ENCODE measurements at regions of chr3 and their contacts with region 1.

Region 1: GRCh38 chr3:187025656-187026316 is 95.5 kb downstream of the ST6GAL1 start:
- DNase-seq: peak; percentile 68
- ATAC-seq: peak; percentile 38
- H3K4me3 Mint-ChIP-seq: peak overlapping the region; percentile 84
- H3K27ac Mint-ChIP-seq: peak overlapping the region; percentile 98
- H3K4me1 Mint-ChIP-seq: peaks cover 46% of the 10 kb centered on the region
- H3K27me3 Mint-ChIP-seq: no peaks in the 10 kb centered on the region
- CTCF ChIP-seq: no peak

Region 2: GRCh38 chr3:185724761-185725160 is 1301.0 kb before region 1 on chr3:
- CTCF ChIA-PET with region 1: no interaction called
- POLR2A ChIA-PET with region 1: no interaction called
- intact Hi-C with region 1: no loop called
- DNase-seq: no peak
- ATAC-seq: no peak
- H3K4me3 Mint-ChIP-seq: no peak overlapping the region
- H3K27ac Mint-ChIP-seq: no peak overlapping the region
- H3K4me1 Mint-ChIP-seq: no peaks in the 10 kb centered on the region
- H3K27me3 Mint-ChIP-seq: peaks cover 2% of the 10 kb centered on the region
- CTCF ChIP-seq: no peak

Region 3: DNA sequence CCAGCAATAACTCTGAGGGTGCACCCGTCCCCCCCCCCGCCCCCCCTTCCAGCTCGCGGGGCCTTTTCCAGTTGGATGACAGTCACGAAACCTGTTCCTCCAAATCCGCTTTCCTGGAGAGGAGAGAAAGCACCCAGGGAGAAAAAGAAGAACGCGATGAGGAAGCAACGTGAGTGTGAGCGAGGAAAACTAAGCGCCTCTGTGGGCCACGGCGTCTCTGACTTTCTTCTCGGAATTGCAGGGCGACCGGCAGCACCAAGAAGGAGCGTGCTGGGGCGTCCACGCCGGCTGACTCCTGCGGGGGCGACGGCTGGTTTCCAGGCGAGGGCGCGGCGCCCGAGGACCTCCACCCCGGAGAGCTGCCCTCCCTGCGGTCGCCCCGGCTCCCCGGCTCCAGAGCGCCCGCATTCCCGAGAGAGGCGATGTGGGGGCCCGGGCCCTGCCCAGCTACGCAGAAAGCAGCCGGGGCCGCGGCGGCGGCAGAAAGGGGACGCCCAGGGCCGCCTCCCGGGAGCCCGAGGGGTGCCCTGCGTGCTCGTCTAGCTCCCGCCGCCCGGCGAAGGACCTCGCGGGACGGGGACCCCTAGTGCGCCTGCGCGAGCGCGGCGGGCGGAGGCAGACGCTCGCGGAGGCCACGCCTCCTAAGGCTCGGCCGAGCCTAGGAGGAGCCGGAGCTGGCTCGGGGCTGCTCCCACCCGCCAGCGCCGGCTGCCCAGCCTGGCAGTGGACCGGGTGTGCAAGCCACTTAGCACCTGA is 198.6 kb before region 1 on chr3:
- CTCF ChIA-PET with region 1: interaction called, 3 read pairs
- POLR2A ChIA-PET with region 1: interaction called, 11 read pairs
- intact Hi-C with region 1: no loop called
- DNase-seq: peak; percentile 83
- ATAC-seq: peak; percentile 86
- H3K4me3 Mint-ChIP-seq: peak overlapping the region; percentile 81
- H3K27ac Mint-ChIP-seq: peak overlapping the region; percentile 71
- H3K4me1 Mint-ChIP-seq: peaks cover 28% of the 10 kb centered on the region
- H3K27me3 Mint-ChIP-seq: peaks cover 36% of the 10 kb centered on the region
- CTCF ChIP-seq: no peak

Region 4: DNA sequence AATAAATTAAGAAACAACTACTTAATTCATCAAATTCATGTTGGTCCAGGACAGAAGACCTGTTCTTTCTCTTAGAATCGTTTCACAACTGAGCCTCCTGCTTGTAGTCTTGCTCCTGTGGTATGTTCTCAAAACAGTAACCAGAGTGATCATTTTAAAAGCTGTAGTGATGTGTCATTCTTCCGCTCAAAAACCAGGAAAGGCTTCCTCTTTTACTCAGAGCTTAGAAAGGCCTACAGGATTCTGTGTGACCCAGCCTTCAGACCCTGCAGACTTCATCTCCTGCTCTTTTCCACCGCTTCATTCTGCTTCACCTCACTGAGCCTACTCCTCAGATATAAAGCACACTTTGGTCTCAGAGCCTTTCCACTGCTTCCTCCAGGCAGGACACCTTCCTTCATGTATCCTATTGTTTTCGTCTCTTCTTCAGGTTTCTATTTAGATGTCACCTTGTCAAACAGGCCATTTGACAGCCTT is 72.7 kb before region 1 on chr3:
- CTCF ChIA-PET with region 1: no interaction called
- POLR2A ChIA-PET with region 1: interaction called, 3 read pairs
- intact Hi-C with region 1: loop called (anchors 5 kb)
- DNase-seq: peak; percentile 23
- ATAC-seq: peak; percentile 86
- H3K4me3 Mint-ChIP-seq: peak overlapping the region; percentile 18
- H3K27ac Mint-ChIP-seq: peak overlapping the region; percentile 82
- H3K4me1 Mint-ChIP-seq: peaks cover 62% of the 10 kb centered on the region
- H3K27me3 Mint-ChIP-seq: no peaks in the 10 kb centered on the region
- CTCF ChIP-seq: no peak

Region 5: DNA sequence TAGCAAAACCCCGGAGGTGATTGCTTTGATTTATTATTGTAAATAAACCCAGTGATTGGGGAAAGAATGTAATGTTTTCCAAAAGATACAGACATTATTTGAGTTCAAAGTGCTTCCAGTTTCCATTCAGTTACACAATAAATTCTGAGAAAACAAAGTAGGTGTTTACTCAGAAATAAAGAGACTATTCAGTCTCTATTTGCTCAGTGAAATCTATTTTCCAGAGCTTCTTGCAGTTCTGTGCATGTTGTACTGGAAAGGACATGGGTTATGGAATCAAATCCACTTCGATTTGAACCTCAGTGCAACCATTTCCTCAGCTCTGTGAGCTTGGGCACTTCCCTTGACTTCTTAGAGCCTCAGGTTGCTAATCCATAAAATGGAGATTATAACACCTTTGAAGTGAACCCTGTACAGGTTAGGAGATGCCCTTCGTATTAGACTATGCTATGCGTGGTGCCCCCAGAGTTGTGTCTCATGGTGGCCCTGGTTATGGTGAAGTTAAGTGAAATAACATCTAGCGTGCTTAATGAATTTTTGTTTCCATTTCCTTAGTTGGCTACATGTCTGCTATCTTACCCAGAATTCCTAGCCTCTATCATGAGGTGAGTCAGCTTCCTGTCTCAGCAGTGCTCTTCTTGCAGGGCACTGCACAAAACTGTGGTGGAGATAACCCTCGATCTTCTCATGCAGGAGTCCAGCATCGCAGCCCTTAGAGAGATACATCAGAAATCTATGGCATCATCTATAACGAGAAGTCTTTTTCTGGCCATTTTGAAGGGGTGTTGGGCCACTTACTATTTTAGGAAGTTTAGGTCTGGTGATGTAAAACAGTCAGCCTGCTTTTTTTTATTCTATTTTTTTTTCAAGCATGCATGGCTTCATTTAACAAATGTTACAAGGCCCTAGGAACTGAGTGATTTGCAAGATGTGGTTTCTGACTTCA is 15.8 kb after region 1 on chr3:
- CTCF ChIA-PET with region 1: interaction called, 10 read pairs
- POLR2A ChIA-PET with region 1: interaction called, 75 read pairs
- intact Hi-C with region 1: loop called (anchors 2 kb)
- DNase-seq: peak; percentile 73
- ATAC-seq: peak; percentile 95
- H3K4me3 Mint-ChIP-seq: peak overlapping the region; percentile 47
- H3K27ac Mint-ChIP-seq: peak overlapping the region; percentile 93
- H3K4me1 Mint-ChIP-seq: peaks cover 79% of the 10 kb centered on the region
- H3K27me3 Mint-ChIP-seq: no peaks in the 10 kb centered on the region
- CTCF ChIP-seq: no peak

Region 6: GRCh38 chr3:187066228-187066995 is 40.6 kb after region 1 on chr3:
- CTCF ChIA-PET with region 1: interaction called, 14 read pairs
- POLR2A ChIA-PET with region 1: interaction called, 4 read pairs
- intact Hi-C with region 1: no loop called
- DNase-seq: peak; percentile 66
- ATAC-seq: peak; percentile 86
- H3K4me3 Mint-ChIP-seq: no peak overlapping the region
- H3K27ac Mint-ChIP-seq: peak overlapping the region; percentile 56
- H3K4me1 Mint-ChIP-seq: peaks cover 64% of the 10 kb centered on the region
- H3K27me3 Mint-ChIP-seq: no peaks in the 10 kb centered on the region
- CTCF ChIP-seq: peak; percentile 51

Region 7: GRCh38 chr3:187077537-187077936 is 51.8 kb after region 1 on chr3:
- CTCF ChIA-PET with region 1: no interaction called
- POLR2A ChIA-PET with region 1: no interaction called
- intact Hi-C with region 1: no loop called
- DNase-seq: no peak
- ATAC-seq: no peak
- H3K4me3 Mint-ChIP-seq: no peak overlapping the region
- H3K27ac Mint-ChIP-seq: peak overlapping the region; percentile 35
- H3K4me1 Mint-ChIP-seq: peaks cover 5% of the 10 kb centered on the region
- H3K27me3 Mint-ChIP-seq: no peaks in the 10 kb centered on the region
- CTCF ChIP-seq: no peak

Region 8: DNA sequence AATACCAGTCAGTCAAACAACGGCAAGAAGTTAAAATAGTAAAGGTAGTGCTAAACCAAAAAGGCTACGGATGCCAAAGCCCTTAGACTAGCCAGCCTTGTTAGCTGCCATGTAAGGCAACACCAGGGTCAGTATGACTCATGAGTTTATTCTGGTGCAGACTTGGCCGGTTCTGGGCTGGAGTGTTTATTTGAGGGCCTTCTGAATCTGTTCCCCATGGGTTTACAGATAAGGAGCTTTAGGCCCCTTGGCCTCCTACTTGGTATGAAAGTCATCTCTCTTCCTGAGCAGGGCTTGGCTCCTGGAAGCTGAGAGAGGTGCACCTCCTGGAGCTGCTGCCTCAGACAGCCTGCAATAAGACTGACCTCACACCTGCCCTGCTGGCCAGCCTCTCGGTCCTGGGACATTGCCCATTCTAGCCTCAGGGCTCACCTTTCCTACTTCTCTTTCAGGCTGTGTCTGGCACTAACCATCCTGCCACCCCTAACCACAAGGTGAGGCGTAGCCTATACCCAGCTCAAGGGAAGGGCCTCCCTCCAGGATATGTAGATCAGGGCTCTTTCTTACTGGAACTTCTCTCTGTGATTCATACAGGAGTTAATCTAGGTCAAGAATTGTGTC is 161.1 kb after region 1 on chr3:
- CTCF ChIA-PET with region 1: no interaction called
- POLR2A ChIA-PET with region 1: no interaction called
- intact Hi-C with region 1: no loop called
- DNase-seq: no peak
- ATAC-seq: no peak
- H3K4me3 Mint-ChIP-seq: no peak overlapping the region
- H3K27ac Mint-ChIP-seq: no peak overlapping the region
- H3K4me1 Mint-ChIP-seq: no peaks in the 10 kb centered on the region
- H3K27me3 Mint-ChIP-seq: peaks cover 23% of the 10 kb centered on the region
- CTCF ChIP-seq: no peak

Region 9: GRCh38 chr3:187264021-187264420 is 238.2 kb after region 1 on chr3:
- CTCF ChIA-PET with region 1: no interaction called
- POLR2A ChIA-PET with region 1: no interaction called
- intact Hi-C with region 1: no loop called
- DNase-seq: no peak
- ATAC-seq: no peak
- H3K4me3 Mint-ChIP-seq: no peak overlapping the region
- H3K27ac Mint-ChIP-seq: no peak overlapping the region
- H3K4me1 Mint-ChIP-seq: no peaks in the 10 kb centered on the region
- H3K27me3 Mint-ChIP-seq: peaks cover 18% of the 10 kb centered on the region
- CTCF ChIP-seq: no peak

Measured in activated CD8-positive, alpha-beta T cell treated with anti-CD3 and anti-CD28 coated beads for 36 hours (primary cell).